Activated naive CD8-positive, alpha-beta T cell treated with anti-CD3 and anti-CD28 coated beads, Interleukin-2, amount 10 ng/mL, durations not matched to agents 7 days and 5 days (primary cell): ENCODE measurements at regions of chr3 and their contacts with region 1.

Region 1: GRCh38 chr3:177359593-177360357 is 162.5 kb upstream of the TBL1XR1 start:
- DNase-seq: peak; percentile 98
- ATAC-seq: peak; percentile 83
- H3K4me3 Mint-ChIP-seq: peak overlapping the region; percentile 90
- H3K27ac Mint-ChIP-seq: peak overlapping the region; percentile 98
- H3K4me1 Mint-ChIP-seq: peaks cover 36% of the 10 kb centered on the region
- H3K27me3 Mint-ChIP-seq: no peaks in the 10 kb centered on the region

Region 2: DNA sequence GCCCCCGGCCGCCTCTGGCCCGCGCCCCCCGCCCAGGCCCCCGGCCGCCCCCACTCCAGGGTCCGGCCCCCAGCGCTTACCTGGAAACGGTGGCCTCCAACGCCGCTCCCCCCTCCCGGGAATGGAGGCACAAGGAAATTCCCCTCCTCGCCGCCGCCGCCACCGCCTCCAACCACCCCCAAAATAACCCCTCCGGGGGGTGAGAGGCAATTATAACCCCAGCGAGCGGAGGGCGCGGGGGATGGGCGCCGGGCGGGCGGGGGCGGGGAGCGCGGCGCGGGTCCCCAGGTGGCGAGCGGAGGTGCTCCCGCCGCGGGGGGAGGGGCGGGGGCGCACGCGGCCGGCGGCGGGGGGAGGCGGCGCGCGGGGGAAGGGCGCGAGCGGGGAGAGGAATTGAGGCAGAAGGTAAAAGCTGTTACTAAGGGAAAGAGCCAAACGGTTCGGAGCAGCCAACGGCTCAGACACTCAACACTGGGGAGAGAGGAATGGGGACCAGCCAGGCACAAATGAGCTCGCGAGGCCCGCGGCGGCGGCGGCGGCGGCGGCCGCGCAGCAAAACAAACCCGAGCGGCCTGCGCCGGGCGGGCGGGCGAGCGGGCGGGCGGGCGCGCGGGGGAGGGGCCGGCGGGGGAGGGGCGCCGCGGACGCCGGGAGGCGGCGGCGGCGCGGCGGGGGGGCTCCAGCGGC is 162.6 kb before region 1 on chr3 and contains the start of gene TBL1XR1:
- POLR2A ChIA-PET with region 1: interaction called, 149 read pairs
- DNase-seq: peak; percentile 89
- ATAC-seq: peak; percentile 63
- H3K4me3 Mint-ChIP-seq: peak within 1 kb of the TSS; percentile 100
- H3K27ac Mint-ChIP-seq: peak within 1 kb of the TSS; percentile 100
- H3K4me1 Mint-ChIP-seq: peaks cover 54% of the 10 kb centered on the region
- H3K27me3 Mint-ChIP-seq: no peaks in the 10 kb centered on the region
- total RNA-seq, gene TBL1XR1: 176 TPM

Region 3: DNA sequence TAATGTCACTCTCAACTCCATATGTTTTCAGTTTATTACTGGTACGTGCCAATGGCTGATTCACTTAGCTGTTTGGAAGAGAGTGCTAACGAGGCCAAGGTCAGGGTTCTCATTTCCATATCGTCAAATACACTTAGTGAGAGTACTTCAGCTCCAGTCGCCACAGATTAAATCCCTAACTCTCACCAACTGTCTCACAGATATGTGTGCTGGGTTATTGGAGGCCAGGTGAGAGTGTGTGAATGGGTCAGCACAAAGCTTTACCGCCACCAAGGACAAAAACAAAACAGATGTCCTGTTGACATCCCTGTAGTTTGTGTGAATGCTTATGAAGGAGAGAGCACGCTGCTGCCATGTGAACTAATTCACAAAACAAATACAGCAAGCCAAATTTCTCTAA is 29.0 kb before region 1 on chr3:
- POLR2A ChIA-PET with region 1: no interaction called
- DNase-seq: no peak
- ATAC-seq: no peak
- H3K4me3 Mint-ChIP-seq: no peak overlapping the region
- H3K27ac Mint-ChIP-seq: no peak overlapping the region
- H3K4me1 Mint-ChIP-seq: peaks cover 10% of the 10 kb centered on the region
- H3K27me3 Mint-ChIP-seq: no peaks in the 10 kb centered on the region